HepG2 (cell line): ENCODE measurements at regions of chr7 and their contacts with region 1.

Region 1: GRCh38 chr7:46153951-46154787 is 233.1 kb upstream of the IGFBP3 start:
- DNase-seq: peak; percentile 87
- ATAC-seq: peak; percentile 93
- H3K4me3 ChIP-seq: peak overlapping the region in 1 of 3 experiments; percentile 13; a peak in 1 of 6 replicates
- H3K27ac ChIP-seq: peak overlapping the region; percentile 85
- H3K4me1 ChIP-seq: peaks cover 69% of the 10 kb centered on the region
- H3K27me3 ChIP-seq: no peaks in the 10 kb centered on the region
- CTCF ChIP-seq: peak; percentile 57
- EP300 ChIP-seq: peak in 1 of 2 experiments; percentile 86; a peak in 2 of 4 replicates
- POLR2A ChIP-seq: no peak
- RAD21 ChIP-seq: peak; percentile 17; the same call in 1 of the 2 replicates

Region 2: GRCh38 chr7:45881759-45882464 is 272.3 kb before region 1 on chr7:
- CTCF ChIA-PET with region 1: no interaction called
- POLR2A ChIA-PET with region 1: interaction called, 11 read pairs
- in situ Hi-C with region 1: no loop called
- intact Hi-C with region 1: no loop called
- DNase-seq: peak; percentile 98
- ATAC-seq: peak; percentile 77
- H3K4me3 ChIP-seq: peak overlapping the region in 1 of 3 experiments; percentile 30; a peak in 1 of 6 replicates
- H3K27ac ChIP-seq: peak overlapping the region; percentile 93
- H3K4me1 ChIP-seq: peaks cover 84% of the 10 kb centered on the region
- H3K27me3 ChIP-seq: no peaks in the 10 kb centered on the region
- CTCF ChIP-seq: peak; percentile 20; the same call in 1 of the 2 replicates
- EP300 ChIP-seq: peak; percentile 88 to 99; a peak in 3 of 4 replicates
- POLR2A ChIP-seq: peak in 1 of 2 experiments; percentile 50; a peak in 1 of 4 replicates
- RAD21 ChIP-seq: no peak

Region 3: GRCh38 chr7:46123756-46124343 is 30.3 kb before region 1 on chr7:
- CTCF ChIA-PET with region 1: no interaction called
- POLR2A ChIA-PET with region 1: no interaction called
- in situ Hi-C with region 1: no loop called
- intact Hi-C with region 1: no loop called
- DNase-seq: no peak
- ATAC-seq: no peak
- H3K4me3 ChIP-seq: no peak overlapping the region
- H3K27ac ChIP-seq: no peak overlapping the region
- H3K4me1 ChIP-seq: no peaks in the 10 kb centered on the region
- H3K27me3 ChIP-seq: no peaks in the 10 kb centered on the region
- CTCF ChIP-seq: no peak
- EP300 ChIP-seq: no peak
- POLR2A ChIP-seq: no peak
- RAD21 ChIP-seq: no peak

Region 4: DNA sequence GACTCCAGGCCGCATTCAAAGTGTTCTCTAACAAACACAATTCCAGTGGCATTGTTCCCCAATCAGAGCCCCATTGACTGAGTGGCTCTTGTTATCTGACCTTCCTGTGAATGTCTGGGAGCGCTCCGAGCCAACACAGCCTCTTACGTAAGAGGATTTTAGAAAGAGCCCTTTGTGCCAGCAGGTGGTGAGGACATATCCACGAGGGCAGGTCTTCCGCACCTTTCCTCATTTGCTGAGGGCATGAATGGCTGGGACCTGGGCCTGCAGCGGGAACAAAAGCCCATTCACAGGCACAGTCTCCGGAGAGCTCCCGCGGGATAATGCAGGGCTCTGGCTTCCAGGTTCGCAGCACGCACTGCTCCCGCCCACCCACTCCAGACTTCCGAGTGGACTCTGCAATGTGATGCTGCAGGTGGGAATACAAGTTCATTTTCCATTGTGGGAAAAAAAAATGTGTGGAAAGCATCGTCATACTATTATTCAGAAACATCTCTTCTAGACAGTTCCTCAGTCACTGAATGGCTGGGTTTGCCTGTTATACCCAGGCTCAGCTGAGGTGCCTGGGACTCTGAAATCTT is 61.9 kb after region 1 on chr7:
- CTCF ChIA-PET with region 1: no interaction called
- POLR2A ChIA-PET with region 1: interaction called, 3 read pairs
- in situ Hi-C with region 1: no loop called
- intact Hi-C with region 1: loop called (anchors 1 kb)
- DNase-seq: peak; percentile 97
- ATAC-seq: peak; percentile 98
- H3K4me3 ChIP-seq: 0 out of 6 replicates have a peak overlapping the region, but pooled peaks of 1 of the 3 experiments have one; percentile 20
- H3K27ac ChIP-seq: peak overlapping the region; percentile 57
- H3K4me1 ChIP-seq: peaks cover 23% of the 10 kb centered on the region
- H3K27me3 ChIP-seq: peaks cover 0 to 18% of the 10 kb centered on the region in 2 experiments; a peak in 1 of 5 replicates
- CTCF ChIP-seq: peak; percentile 21; the same call in 1 of the 2 replicates
- EP300 ChIP-seq: peak; percentile 29 to 79; a peak in 2 of 4 replicates
- POLR2A ChIP-seq: no peak
- RAD21 ChIP-seq: no peak

Region 5: DNA sequence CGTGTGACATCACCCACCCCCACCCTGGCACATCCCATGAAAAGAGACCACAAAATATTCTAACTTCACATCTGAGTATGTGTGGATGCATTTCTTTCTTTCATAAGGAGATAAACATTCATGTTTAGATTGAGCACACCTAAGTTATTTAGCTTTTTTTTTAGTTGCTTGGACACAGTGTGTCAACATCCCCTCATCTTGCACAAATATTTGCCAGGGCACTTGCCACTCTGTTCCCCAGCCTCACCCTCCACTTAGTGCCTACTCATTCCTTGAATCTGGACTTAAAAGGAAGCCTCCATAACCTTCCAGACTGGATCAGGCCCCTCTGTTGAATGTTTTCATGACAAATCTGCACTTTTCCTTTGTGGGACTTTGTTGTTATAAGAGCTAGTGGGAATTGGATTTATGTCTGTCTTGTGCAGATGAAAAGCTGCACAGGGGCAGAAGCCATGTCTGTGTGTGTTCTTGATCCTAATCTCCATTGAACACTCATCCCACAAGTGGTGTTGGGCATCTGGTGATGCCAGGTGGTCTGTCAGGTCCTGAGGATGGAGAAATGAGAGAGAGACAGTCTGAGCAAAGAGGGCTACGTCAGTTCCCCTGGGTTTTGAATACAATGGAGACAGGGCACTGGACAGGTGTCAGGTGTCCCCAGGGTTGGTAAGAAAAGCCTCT is 105.9 kb after region 1 on chr7:
- CTCF ChIA-PET with region 1: no interaction called
- POLR2A ChIA-PET with region 1: no interaction called
- in situ Hi-C with region 1: no loop called
- intact Hi-C with region 1: no loop called
- DNase-seq: no peak
- ATAC-seq: no peak
- H3K4me3 ChIP-seq: no peak overlapping the region
- H3K27ac ChIP-seq: no peak overlapping the region
- H3K4me1 ChIP-seq: no peaks in the 10 kb centered on the region
- H3K27me3 ChIP-seq: no peaks in the 10 kb centered on the region
- CTCF ChIP-seq: no peak
- EP300 ChIP-seq: no peak
- POLR2A ChIP-seq: no peak
- RAD21 ChIP-seq: no peak

Region 6: DNA sequence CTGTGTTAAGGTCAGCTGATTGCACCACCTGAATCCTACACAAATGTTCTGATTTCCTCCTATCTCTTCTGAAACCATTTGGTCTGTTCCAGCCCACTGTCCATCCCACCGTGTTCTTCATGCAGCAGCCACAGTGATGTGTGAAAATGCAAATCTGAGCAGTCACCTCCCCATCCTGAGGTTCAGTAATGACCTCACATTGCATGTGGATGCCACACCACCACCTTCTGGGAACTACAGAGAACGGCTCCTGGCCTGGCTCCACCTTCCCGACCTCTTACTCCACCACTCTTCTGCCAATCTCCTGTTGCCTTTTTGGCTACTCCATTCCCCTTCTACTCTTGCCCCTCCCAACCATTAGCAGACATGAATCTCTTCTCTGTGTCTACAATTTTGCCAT is 1183.4 kb after region 1 on chr7:
- CTCF ChIA-PET with region 1: no interaction called
- POLR2A ChIA-PET with region 1: no interaction called
- in situ Hi-C with region 1: no loop called
- intact Hi-C with region 1: no loop called
- DNase-seq: no peak
- ATAC-seq: 0 out of 3 replicates have a peak, but pooled peaks have one; percentile 31
- H3K4me3 ChIP-seq: no peak overlapping the region
- H3K27ac ChIP-seq: no peak overlapping the region
- H3K4me1 ChIP-seq: no peaks in the 10 kb centered on the region
- H3K27me3 ChIP-seq: no peaks in the 10 kb centered on the region
- CTCF ChIP-seq: no peak
- EP300 ChIP-seq: no peak
- POLR2A ChIP-seq: no peak
- RAD21 ChIP-seq: no peak